CD4-positive, alpha-beta T cell (primary cell): ENCODE measurements at regions of chr17 and their contacts with region 1.

Region 1: GRCh38 chr17:2972749-2973148 is 90.7 kb downstream of the OR1D5 start:
- DNase-seq: no peak
- ATAC-seq: no peak
- H3K4me3 ChIP-seq: no peak overlapping the region
- H3K4me3 Mint-ChIP-seq: no peak overlapping the region
- H3K27ac ChIP-seq: no peak overlapping the region
- H3K27ac Mint-ChIP-seq: no peak overlapping the region
- H3K4me1 ChIP-seq: no peaks in the 10 kb centered on the region
- H3K4me1 Mint-ChIP-seq: no peaks in the 10 kb centered on the region
- H3K27me3 ChIP-seq: no peaks in the 10 kb centered on the region
- H3K27me3 Mint-ChIP-seq: no peaks in the 10 kb centered on the region
- CTCF ChIP-seq: no peak

Region 2: GRCh38 chr17:2916461-2916860 is 56.3 kb before region 1 on chr17:
- CTCF ChIA-PET with region 1: no interaction called
- POLR2A ChIA-PET with region 1: no interaction called
- intact Hi-C with region 1: loop called in 1 of 2 experiments (anchors 5 kb)
- DNase-seq: no peak
- ATAC-seq: no peak
- H3K4me3 ChIP-seq: no peak overlapping the region
- H3K4me3 Mint-ChIP-seq: no peak overlapping the region
- H3K27ac ChIP-seq: no peak overlapping the region
- H3K27ac Mint-ChIP-seq: no peak overlapping the region
- H3K4me1 ChIP-seq: no peaks in the 10 kb centered on the region
- H3K4me1 Mint-ChIP-seq: no peaks in the 10 kb centered on the region
- H3K27me3 ChIP-seq: no peaks in the 10 kb centered on the region
- H3K27me3 Mint-ChIP-seq: no peaks in the 10 kb centered on the region
- CTCF ChIP-seq: no peak